ENCODE measurements at regions of chr11 and their contacts with region 1.

Region 1: DNA sequence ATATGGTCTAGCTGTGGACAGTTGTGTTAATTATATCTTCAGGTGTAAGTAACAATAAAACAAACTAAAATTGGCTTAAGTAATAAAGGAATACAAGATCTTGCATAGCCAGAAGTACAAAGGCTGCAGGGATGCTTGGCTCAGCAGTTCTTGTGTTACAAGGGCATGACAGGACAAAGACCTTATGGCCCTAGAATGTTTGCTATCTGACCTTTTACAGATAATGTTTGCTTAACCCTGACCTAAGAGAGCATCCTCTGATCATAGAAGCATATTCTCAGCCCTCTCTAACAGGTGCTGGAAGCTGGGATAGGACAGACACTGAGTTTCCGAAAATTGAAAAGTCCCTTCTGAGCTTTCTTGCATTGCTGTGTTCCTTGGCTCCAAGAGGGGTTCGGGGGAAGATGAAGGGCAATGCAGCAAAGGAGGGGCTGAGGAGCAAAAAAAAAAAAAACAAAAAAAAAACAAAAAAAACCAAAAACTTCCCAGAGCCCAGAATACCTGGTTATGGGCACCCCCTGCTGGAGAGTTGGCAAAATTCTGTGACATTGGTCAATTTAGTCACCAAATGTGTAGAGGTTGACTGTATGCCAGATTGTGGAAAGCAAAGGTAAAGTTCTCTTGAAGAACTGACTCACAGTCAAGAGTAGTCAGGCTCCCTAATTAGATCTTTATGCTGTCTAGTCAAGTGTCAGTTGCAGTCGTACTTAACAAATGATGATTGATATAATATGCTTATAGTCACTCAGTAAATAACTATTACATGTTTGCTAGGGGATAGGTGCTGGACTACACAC is 10.4 kb upstream of the HIKESHI start:
- DNase-seq: peak; percentile 88
- H3K4me3 Mint-ChIP-seq: no peak overlapping the region
- H3K27ac Mint-ChIP-seq: peak overlapping the region; percentile 53
- H3K4me1 Mint-ChIP-seq: peaks cover 58% of the 10 kb centered on the region
- H3K27me3 Mint-ChIP-seq: no peaks in the 10 kb centered on the region

Region 2: GRCh38 chr11:85699957-85700741 is 591.5 kb before region 1 on chr11:
- CTCF ChIA-PET with region 1: no interaction called
- intact Hi-C with region 1: loop called (anchors 1 kb)
- DNase-seq: no peak
- H3K4me3 Mint-ChIP-seq: no peak overlapping the region
- H3K27ac Mint-ChIP-seq: peak overlapping the region; percentile 36
- H3K4me1 Mint-ChIP-seq: peaks cover 35% of the 10 kb centered on the region
- H3K27me3 Mint-ChIP-seq: no peaks in the 10 kb centered on the region

Region 3: GRCh38 chr11:85941380-85941973 is 350.2 kb before region 1 on chr11:
- CTCF ChIA-PET with region 1: interaction called, 4 read pairs
- intact Hi-C with region 1: loop called (anchors 1 kb)
- DNase-seq: peak; percentile 76
- H3K4me3 Mint-ChIP-seq: no peak overlapping the region
- H3K27ac Mint-ChIP-seq: no peak overlapping the region
- H3K4me1 Mint-ChIP-seq: peaks cover 18% of the 10 kb centered on the region
- H3K27me3 Mint-ChIP-seq: no peaks in the 10 kb centered on the region

Region 4: GRCh38 chr11:86116386-86116726 is 175.3 kb before region 1 on chr11:
- CTCF ChIA-PET with region 1: no interaction called
- intact Hi-C with region 1: loop called (anchors 2 kb)
- DNase-seq: peak; percentile 57
- H3K4me3 Mint-ChIP-seq: no peak overlapping the region
- H3K27ac Mint-ChIP-seq: peak overlapping the region; percentile 17
- H3K4me1 Mint-ChIP-seq: peaks cover 28% of the 10 kb centered on the region
- H3K27me3 Mint-ChIP-seq: peaks cover 5% of the 10 kb centered on the region

Region 5: DNA sequence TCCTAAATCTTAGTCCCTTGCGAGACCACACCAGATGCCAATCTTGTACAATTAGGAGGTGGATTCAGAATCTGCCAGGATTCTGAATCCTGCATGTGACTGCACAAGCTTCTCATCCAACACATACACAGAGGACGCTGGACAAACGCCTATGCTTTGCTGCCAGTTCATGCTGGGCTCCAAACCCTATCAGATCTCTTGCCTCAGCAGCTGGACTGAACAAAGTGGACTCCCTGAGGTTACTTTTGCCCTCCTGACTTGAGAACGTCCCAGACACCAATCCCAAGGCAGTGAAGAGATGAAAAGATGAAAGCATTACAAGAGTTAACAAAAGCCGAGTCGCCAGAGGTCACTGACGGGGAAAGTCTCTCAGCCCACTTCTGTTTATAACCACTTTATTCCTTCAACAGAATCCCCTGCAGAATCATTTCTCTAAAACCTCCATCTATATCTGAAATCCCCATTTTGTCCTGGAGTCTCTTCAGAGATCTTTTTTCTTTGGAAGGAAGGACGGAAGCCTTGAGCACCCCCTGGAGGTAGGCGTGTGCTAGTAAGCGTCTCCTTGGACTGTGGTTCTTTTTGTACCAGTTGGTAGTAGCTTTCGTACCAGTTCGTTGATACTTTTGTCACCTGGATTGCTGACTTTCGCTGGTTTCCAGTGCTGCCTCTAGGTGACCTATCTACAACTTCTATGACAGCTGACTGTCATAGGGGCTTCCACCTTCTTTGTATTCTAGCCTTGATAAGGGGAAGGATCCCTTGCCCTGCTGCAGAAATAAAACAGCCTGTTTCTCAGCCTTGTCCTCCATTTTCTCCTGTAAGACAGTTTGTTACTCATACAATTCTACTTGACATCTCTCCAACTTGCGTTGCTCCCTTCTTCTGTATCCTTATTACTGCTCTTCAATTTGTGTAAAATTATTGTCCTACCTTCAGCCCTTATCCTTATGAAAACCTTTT is 73.3 kb before region 1 on chr11:
- CTCF ChIA-PET with region 1: interaction called, 7 read pairs
- intact Hi-C with region 1: loop called (anchors 1 kb)
- DNase-seq: peak; percentile 80
- H3K4me3 Mint-ChIP-seq: peak overlapping the region; percentile 14
- H3K27ac Mint-ChIP-seq: peak overlapping the region; percentile 90
- H3K4me1 Mint-ChIP-seq: peaks cover 82% of the 10 kb centered on the region
- H3K27me3 Mint-ChIP-seq: peaks cover 3% of the 10 kb centered on the region

Region 6: DNA sequence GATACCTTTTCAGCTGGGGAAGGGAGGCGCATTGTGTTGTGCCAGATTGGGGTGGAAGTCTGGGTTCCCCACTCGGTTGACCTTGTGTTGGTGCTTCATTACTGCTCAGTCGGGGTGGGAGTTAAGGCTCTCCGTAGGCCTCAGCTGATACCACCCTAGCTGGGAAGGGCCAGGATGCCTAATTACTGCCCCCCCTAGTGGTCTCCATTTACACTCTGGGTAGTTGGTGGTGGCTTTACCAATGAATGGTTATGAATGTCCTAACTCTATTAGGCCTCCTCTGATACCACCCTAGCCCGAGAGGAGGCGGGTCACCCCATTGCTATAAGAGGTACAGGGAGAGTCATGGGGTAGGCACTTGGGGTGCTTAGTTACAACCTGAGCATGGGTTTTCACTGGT is 17.2 kb before region 1 on chr11:
- CTCF ChIA-PET with region 1: no interaction called
- intact Hi-C with region 1: no loop called
- DNase-seq: no peak
- H3K4me3 Mint-ChIP-seq: no peak overlapping the region
- H3K27ac Mint-ChIP-seq: no peak overlapping the region
- H3K4me1 Mint-ChIP-seq: peaks cover 55% of the 10 kb centered on the region
- H3K27me3 Mint-ChIP-seq: no peaks in the 10 kb centered on the region

Region 7: DNA sequence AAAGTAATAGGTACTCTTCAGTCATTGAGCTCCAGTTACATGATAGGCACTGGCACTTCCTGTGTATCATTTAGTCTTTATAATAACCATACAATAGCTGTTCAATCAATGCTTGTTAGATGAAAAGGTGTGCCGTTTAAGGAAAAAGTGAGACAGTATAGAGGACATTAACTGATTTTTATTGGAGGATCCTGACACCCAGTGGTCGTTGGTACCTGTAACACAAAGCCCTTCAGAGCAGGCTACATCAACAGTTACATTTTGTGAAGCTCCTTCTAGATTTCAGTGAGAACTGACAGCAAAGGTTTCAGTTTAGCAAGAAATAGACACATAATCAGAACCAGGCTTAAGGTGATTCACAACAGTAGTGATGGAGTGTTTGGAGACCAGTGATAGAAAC is 127.3 kb after region 1 on chr11:
- CTCF ChIA-PET with region 1: no interaction called
- intact Hi-C with region 1: loop called (anchors 2 kb)
- DNase-seq: peak; percentile 18
- H3K4me3 Mint-ChIP-seq: no peak overlapping the region
- H3K27ac Mint-ChIP-seq: no peak overlapping the region
- H3K4me1 Mint-ChIP-seq: peaks cover 3% of the 10 kb centered on the region
- H3K27me3 Mint-ChIP-seq: no peaks in the 10 kb centered on the region

Measured in activated naive CD4-positive, alpha-beta T cell treated with anti-CD3 and anti-CD28 coated beads for 36 hours (primary cell).